Naive thymus-derived CD4-positive, alpha-beta T cell (primary cell): ENCODE measurements at regions of chr7 and their contacts with region 1.

Region 1: GRCh38 chr7:65981965-65982792 is at the start of gene GUSB:
- DNase-seq: peak; percentile 80 to 91 (median 86)
- ATAC-seq: peak; percentile 87
- H3K4me3 ChIP-seq: peak within 1 kb of the TSS; percentile 88
- H3K4me3 Mint-ChIP-seq: peak within 1 kb of the TSS; percentile 76 to 91 (median 80)
- H3K27ac ChIP-seq: peak within 1 kb of the TSS; percentile 78
- H3K27ac Mint-ChIP-seq: peak within 1 kb of the TSS; percentile 36 to 91 (median 64)
- H3K4me1 ChIP-seq: peaks cover 15 to 19% of the 10 kb centered on the region in 2 donors
- H3K4me1 Mint-ChIP-seq: peaks cover 0 to 21% (median 10%) of the 10 kb centered on the region in 7 donors
- H3K27me3 ChIP-seq: no peaks in the 10 kb centered on the region
- H3K27me3 Mint-ChIP-seq: no peaks in the 10 kb centered on the region
- total RNA-seq, gene GUSB: 41.8 to 62.5 (median 53.3) TPM

Region 2: DNA sequence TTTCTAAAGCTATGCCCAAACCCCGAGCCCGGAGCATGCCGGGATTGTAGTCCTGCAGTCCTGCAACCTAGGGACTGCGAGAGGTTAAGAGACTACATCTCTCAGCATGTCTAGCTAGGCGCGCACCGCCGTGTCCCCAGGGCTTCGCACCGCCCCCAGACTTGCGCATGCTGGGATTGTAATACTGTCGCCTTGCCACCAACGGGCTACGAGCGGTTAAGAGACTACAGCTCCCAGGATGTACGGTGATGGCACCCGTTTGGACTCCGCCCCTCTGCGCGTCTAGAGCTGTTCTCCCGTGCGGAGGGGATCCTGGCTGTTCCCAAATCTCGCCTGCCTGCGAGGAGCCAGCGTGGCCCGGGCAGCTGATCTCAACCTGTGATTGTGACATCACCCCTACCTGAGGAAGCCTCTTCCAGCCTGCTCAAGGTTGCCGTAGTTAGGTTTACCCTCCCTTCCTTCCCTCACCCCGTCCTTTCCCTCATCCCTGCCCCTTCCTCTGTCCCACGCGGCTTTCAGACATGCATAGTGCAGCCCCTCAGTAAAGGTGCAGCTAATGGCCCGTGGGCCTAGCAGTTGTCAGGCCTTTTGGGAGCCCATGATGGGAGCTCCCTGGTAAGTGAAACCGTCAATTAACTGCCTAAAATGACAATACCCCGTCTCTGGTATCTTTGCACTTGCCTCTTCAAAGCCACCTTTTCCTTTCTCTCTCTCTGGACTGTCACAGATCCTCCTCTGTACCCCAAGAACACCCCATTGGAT is 1674.7 kb before region 1 on chr7:
- CTCF ChIA-PET with region 1: no interaction called
- POLR2A ChIA-PET with region 1: no interaction called
- intact Hi-C with region 1: loop called in 1 of 2 experiments (anchors 5 kb)
- DNase-seq: peak; percentile 76 to 95 (median 93)
- ATAC-seq: peak; percentile 99
- H3K4me3 ChIP-seq: peak overlapping the region; percentile 95
- H3K4me3 Mint-ChIP-seq: peak overlapping the region; percentile 90 to 100 (median 96)
- H3K27ac ChIP-seq: peak overlapping the region; percentile 83
- H3K27ac Mint-ChIP-seq: peak overlapping the region; percentile 94 to 99 (median 97)
- H3K4me1 ChIP-seq: peaks cover 0 to 13% of the 10 kb centered on the region in 2 donors
- H3K4me1 Mint-ChIP-seq: peaks cover 13 to 30% (median 19%) of the 10 kb centered on the region in 7 donors
- H3K27me3 ChIP-seq: no peaks in the 10 kb centered on the region
- H3K27me3 Mint-ChIP-seq: no peaks in the 10 kb centered on the region

Region 3: GRCh38 chr7:65373608-65374351 is 608.4 kb before region 1 on chr7 and contains the start of gene ZNF92:
- CTCF ChIA-PET with region 1: no interaction called
- POLR2A ChIA-PET with region 1: no interaction called
- intact Hi-C with region 1: loop called (anchors 2 to 5 kb)
- DNase-seq: peak; percentile 84 to 95 (median 94)
- ATAC-seq: peak; percentile 99
- H3K4me3 ChIP-seq: peak within 1 kb of the TSS; percentile 87
- H3K4me3 Mint-ChIP-seq: peak within 1 kb of the TSS; percentile 90 to 98 (median 96)
- H3K27ac ChIP-seq: peak within 1 kb of the TSS; percentile 82
- H3K27ac Mint-ChIP-seq: peak within 1 kb of the TSS; percentile 87 to 96 (median 93)
- H3K4me1 ChIP-seq: peaks cover 8 to 21% of the 10 kb centered on the region in 2 donors
- H3K4me1 Mint-ChIP-seq: peaks cover 18 to 57% (median 49%) of the 10 kb centered on the region in 7 donors
- H3K27me3 ChIP-seq: no peaks in the 10 kb centered on the region
- H3K27me3 Mint-ChIP-seq: no peaks in the 10 kb centered on the region
- total RNA-seq, gene ZNF92: 16.3 to 22.5 (median 19.3) TPM

Region 4: DNA sequence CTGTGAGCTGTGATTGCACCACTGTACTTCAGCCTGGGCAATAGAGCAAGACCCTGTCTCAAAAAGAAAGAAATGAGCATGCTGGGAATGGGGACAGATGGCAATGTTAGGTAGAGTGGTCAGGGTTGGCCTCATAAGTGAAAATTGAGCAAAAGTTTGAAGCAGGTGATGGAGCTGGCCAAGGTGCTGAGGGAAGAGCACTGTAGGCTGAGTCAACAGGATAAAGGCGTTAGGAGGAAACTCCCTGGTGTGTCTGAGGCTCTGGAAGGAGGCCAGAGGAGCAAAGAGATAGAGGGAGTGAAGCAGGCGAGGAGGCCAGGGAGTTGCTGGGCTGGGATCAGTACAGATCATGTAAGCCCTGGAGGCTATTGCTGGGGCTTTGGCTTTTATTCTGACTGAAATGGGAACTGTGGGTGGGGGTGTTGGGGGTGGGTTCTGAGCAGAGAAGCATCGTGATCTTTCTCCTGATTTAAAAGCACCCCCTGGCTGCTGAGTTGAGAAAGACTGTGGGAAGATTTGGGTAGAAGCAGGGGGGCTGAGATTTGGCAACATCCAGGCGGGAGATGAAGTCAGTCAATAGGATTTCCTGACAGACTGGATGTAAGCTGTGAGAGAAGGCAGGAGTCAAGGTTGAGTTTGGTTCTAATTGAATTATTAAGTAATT is 161.8 kb before region 1 on chr7:
- CTCF ChIA-PET with region 1: no interaction called
- POLR2A ChIA-PET with region 1: no interaction called
- intact Hi-C with region 1: no loop called
- DNase-seq: no peak
- ATAC-seq: no peak
- H3K4me3 ChIP-seq: no peak overlapping the region
- H3K4me3 Mint-ChIP-seq: no peak overlapping the region
- H3K27ac ChIP-seq: no peak overlapping the region
- H3K27ac Mint-ChIP-seq: no peak overlapping the region
- H3K4me1 ChIP-seq: no peaks in the 10 kb centered on the region
- H3K4me1 Mint-ChIP-seq: no peaks in the 10 kb centered on the region
- H3K27me3 ChIP-seq: no peaks in the 10 kb centered on the region
- H3K27me3 Mint-ChIP-seq: no peaks in the 10 kb centered on the region

Region 5: GRCh38 chr7:65992526-65992925 is 10.3 kb after region 1 on chr7:
- CTCF ChIA-PET with region 1: no interaction called
- POLR2A ChIA-PET with region 1: no interaction called
- intact Hi-C with region 1: no loop called
- DNase-seq: no peak
- ATAC-seq: no peak
- H3K4me3 ChIP-seq: no peak overlapping the region
- H3K4me3 Mint-ChIP-seq: no peak overlapping the region
- H3K27ac ChIP-seq: no peak overlapping the region
- H3K27ac Mint-ChIP-seq: no peak overlapping the region
- H3K4me1 ChIP-seq: no peaks in the 10 kb centered on the region
- H3K4me1 Mint-ChIP-seq: peaks cover 0 to 1% (median 0%) of the 10 kb centered on the region in 7 donors
- H3K27me3 ChIP-seq: no peaks in the 10 kb centered on the region
- H3K27me3 Mint-ChIP-seq: peaks cover 0 to 10% (median 0%) of the 10 kb centered on the region in 5 donors

Region 6: DNA sequence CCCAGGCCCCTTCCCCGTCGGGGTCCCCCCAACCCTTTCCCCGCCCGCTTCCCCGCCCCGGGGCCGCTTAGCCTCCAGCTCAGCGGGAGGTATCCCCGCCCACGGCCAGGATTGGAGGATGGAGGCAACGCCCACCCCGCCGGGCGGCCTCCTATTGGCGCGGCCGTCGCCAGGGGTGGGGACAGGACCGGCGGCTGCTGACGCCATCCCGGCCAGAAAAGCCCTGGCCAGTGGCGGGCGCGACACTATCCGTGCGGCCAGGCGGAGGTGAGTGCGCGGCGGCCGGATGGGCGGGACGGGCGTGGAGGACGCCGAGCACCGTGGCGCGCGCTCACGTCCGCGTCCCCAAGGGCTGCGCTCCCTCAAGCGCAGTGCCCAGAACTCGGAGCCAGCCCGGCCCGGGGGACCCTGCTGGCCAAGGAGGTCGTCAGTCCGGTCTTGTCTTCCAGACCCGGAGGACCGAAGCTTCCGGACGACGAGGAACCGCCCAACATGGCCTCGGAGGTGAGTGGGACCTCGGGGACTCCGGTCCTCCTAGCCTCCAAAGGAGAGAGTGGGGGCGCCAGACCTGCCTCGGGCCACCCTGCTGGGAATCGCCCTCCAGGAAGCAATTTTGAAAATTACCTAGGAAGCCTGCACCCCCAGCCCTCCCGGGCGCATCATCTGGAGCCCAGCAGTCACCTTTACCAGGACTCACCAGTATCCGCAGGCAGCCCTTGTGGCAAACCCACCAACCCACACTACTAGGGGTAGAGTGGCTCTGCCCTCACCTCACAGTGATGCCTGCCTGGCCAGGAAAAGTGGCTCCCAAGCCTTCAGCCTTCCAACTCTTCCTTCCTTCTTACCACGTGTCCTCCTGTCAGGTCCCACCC is 93.6 kb after region 1 on chr7 and contains the start of gene ASL:
- CTCF ChIA-PET with region 1: no interaction called
- POLR2A ChIA-PET with region 1: no interaction called
- intact Hi-C with region 1: loop called (anchors 1 kb)
- DNase-seq: peak; percentile 71 to 96 (median 78)
- ATAC-seq: peak; percentile 99
- H3K4me3 ChIP-seq: peak within 1 kb of the TSS; percentile 83
- H3K4me3 Mint-ChIP-seq: peak within 1 kb of the TSS; percentile 80 to 96 (median 87)
- H3K27ac ChIP-seq: peak within 1 kb of the TSS; percentile 69
- H3K27ac Mint-ChIP-seq: peak within 1 kb of the TSS in 8 of 9 donors; percentile 42 to 89 (median 77)
- H3K4me1 ChIP-seq: peaks cover 6 to 7% of the 10 kb centered on the region in 2 donors
- H3K4me1 Mint-ChIP-seq: peaks cover 5 to 20% (median 19%) of the 10 kb centered on the region in 7 donors
- H3K27me3 ChIP-seq: no peaks in the 10 kb centered on the region
- H3K27me3 Mint-ChIP-seq: peaks cover 0 to 2% (median 0%) of the 10 kb centered on the region in 5 donors
- total RNA-seq, gene ASL: 11.3 to 29.7 (median 12.8) TPM

Region 7: DNA sequence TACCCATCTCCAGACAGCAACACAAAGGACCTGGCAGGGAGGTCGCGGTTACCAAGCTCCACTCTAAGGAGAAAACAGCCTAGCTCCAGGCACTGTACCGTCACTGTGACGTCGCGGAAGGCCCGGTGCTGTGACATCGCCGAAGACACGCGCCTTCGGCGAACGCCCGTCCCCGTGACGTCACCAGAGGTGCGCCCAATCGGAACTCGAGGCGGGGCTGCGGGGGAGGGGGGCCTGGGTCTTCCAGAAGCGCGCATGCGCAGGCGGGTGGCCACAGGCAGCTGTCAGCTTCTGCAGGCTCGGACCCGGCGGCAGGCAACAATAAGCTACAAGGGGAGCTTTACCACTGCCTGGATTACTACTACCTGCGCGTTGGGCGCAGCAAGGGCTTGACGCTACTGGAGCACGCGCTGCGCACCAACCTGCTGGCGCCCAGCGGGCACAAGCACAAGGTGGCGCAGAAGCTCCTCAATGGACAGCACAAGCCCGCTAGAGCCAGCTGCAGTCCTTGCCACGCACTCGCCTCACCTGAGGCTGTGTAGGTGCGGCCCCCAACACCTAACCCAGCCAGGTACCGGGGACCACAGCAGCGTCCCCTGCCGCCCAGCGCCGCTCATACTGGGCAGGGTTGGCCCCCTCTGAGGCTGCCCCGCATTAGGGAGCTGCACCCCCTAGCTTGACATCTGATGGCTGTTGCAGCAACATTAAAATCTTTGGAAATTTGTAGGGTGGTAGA is 431.4 kb after region 1 on chr7:
- CTCF ChIA-PET with region 1: no interaction called
- POLR2A ChIA-PET with region 1: no interaction called
- intact Hi-C with region 1: loop called in 1 of 2 experiments (anchors 1 kb)
- DNase-seq: peak; percentile 78 to 92 (median 82)
- ATAC-seq: peak; percentile 94
- H3K4me3 ChIP-seq: peak overlapping the region; percentile 74
- H3K4me3 Mint-ChIP-seq: peak overlapping the region; percentile 63 to 82 (median 80)
- H3K27ac ChIP-seq: peak overlapping the region; percentile 37
- H3K27ac Mint-ChIP-seq: peak overlapping the region; percentile 38 to 95 (median 90)
- H3K4me1 ChIP-seq: peaks cover 0 to 6% of the 10 kb centered on the region in 2 donors
- H3K4me1 Mint-ChIP-seq: peaks cover 0 to 22% (median 10%) of the 10 kb centered on the region in 7 donors
- H3K27me3 ChIP-seq: no peaks in the 10 kb centered on the region
- H3K27me3 Mint-ChIP-seq: no peaks in the 10 kb centered on the region

Region 8: GRCh38 chr7:66920769-66921395 is 938.7 kb after region 1 on chr7 and contains the start of gene TMEM248:
- CTCF ChIA-PET with region 1: no interaction called
- POLR2A ChIA-PET with region 1: interaction called, 3 read pairs
- intact Hi-C with region 1: loop called (anchors 2 kb)
- DNase-seq: peak; percentile 87 to 97 (median 94)
- ATAC-seq: peak; percentile 95
- H3K4me3 ChIP-seq: peak within 1 kb of the TSS; percentile 80
- H3K4me3 Mint-ChIP-seq: peak within 1 kb of the TSS; percentile 91 to 100 (median 98)
- H3K27ac ChIP-seq: peak within 1 kb of the TSS; percentile 93
- H3K27ac Mint-ChIP-seq: peak within 1 kb of the TSS; percentile 96 to 100 (median 98)
- H3K4me1 ChIP-seq: peaks cover 18 to 20% of the 10 kb centered on the region in 2 donors
- H3K4me1 Mint-ChIP-seq: peaks cover 14 to 49% (median 37%) of the 10 kb centered on the region in 7 donors
- H3K27me3 ChIP-seq: no peaks in the 10 kb centered on the region
- H3K27me3 Mint-ChIP-seq: no peaks in the 10 kb centered on the region
- total RNA-seq, gene TMEM248: 81.0 to 107 (median 91.6) TPM